Right ventricle myocardium inferior (tissue), 1 donor: ENCODE measurements at regions of chr13 and their contacts with region 1.

Region 1: GRCh38 chr13:99436686-99437416 is 64.4 kb upstream of the TM9SF2 start:
- DNase-seq: peak; percentile 94
- ATAC-seq: peak; percentile 41

Region 2: GRCh38 chr13:99176309-99177276 is 260.3 kb before region 1 on chr13:
- intact Hi-C with region 1: loop called (anchors 2 kb)
- DNase-seq: peak; percentile 77
- ATAC-seq: peak; percentile 78

Region 3: DNA sequence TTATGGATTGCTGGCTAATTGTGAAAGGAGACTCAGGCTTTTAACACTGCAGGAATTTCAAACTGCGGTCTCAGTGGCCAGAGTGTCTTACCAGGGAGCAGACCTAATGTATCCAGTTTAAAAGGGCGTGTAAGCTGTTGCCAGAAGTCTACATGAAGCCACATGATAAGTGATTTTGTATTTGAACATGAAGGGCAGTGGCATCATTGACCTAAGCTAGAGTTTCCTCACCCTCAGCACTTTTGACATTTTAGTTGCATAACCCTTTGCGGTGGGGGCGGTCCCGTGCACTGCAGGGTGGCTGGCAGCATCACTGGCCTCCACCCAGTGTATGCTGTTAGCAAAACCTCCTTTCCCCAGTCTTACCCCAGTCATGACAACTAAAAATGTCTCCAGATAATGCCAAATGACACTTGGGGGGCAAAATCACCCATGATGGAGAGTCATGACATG is 155.0 kb before region 1 on chr13:
- intact Hi-C with region 1: no loop called
- DNase-seq: peak; percentile 86
- ATAC-seq: peak; percentile 74

Region 4: GRCh38 chr13:99749271-99750019 is 312.6 kb after region 1 on chr13:
- intact Hi-C with region 1: no loop called
- DNase-seq: no peak
- ATAC-seq: no peak